HAP-1 (cell line): ENCODE measurements at regions of chr9 and their contacts with region 1.

Region 1: GRCh38 chr9:130866474-130866965 is 30.1 kb downstream of the QRFP start:
- DNase-seq: peak; percentile 89 to 93
- H3K4me3 ChIP-seq: no peak overlapping the region
- H3K4me1 ChIP-seq: no peaks in the 10 kb centered on the region
- H3K27me3 ChIP-seq: no peaks in the 10 kb centered on the region

Region 2: DNA sequence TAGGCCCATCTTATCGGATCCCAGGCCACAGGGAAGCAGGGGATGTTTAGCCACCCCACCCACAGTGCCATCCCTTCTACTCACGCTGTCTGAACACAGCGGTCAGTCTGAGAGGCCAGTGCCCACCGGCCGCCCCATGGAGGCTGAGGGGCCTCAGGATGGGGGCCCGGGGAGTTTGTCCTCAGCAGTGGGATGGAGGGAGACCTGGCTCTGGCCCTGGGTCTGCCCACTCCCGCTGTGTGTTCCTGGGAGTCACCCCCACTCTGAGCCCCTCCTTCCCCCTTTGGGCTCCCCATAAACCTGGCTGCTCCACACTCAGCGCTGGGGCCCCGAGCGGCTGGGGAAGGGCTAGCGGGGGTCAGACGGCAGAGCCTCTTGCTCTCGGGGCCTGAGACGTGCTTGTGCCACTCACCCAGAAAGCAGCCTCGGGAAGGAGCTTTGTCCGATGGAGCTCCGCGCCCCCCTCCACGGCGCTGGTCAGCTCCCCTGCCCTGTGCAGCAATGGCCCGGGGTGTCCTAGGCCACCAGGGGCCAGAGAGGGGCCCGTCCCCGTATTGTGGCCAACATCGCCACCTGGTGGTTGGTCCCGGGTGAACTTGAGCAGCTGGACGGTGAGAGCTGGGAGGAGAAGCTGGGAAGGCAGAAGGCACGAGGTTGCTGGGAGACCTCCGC is 131.5 kb after region 1 on chr9:
- in situ Hi-C with region 1: loop called (anchors 5 kb)
- DNase-seq: peak; percentile 54 to 90
- H3K4me3 ChIP-seq: no peak overlapping the region
- H3K4me1 ChIP-seq: no peaks in the 10 kb centered on the region
- H3K27me3 ChIP-seq: peaks cover 29% of the 10 kb centered on the region

Region 3: GRCh38 chr9:131046581-131047202 is 180.2 kb after region 1 on chr9:
- in situ Hi-C with region 1: loop called (anchors 5 kb)
- DNase-seq: peak; percentile 73 to 83
- H3K4me3 ChIP-seq: no peak overlapping the region
- H3K4me1 ChIP-seq: no peaks in the 10 kb centered on the region
- H3K27me3 ChIP-seq: no peaks in the 10 kb centered on the region